ENCODE measurements at regions of chr12 and their contacts with region 1.

Region 1: DNA sequence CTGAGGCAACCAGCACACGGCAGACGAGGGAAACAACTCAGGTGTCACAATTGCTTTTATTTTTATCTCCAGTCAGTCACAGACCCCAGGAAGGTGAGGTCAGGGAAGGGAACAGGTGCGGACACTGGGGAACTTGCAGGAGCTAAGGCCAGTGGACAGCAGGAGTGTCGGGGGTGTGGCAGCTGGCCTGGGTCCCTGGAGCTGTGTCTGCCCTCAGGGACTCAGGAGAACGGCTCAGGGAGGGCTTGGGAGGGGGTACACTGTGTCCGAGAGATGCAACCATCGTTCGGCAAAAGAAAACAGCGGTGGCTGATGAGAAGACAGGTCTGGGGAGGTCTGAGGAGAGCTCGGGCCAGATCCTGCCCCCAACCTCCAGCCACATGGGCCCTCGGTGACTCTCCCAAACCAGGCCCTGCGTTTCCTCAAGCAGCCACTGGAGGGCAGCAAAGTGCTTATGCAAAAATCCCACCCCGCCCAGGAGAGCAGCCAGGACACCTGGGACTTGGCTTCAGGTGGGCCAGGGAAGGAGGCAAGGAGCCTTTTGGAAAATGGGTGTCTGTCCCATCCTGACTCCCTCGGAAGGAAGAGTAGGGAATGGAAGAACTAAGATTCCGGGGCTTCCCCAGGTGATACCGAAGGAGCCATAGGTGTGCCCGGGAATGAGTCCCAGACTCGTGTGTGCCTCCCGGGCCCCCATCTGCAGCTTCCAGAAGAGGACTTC is 24.1 kb upstream of the BCDIN3D start:
- DNase-seq: peak; percentile 93
- CTCF ChIP-seq: peak; percentile 94

Region 2: DNA sequence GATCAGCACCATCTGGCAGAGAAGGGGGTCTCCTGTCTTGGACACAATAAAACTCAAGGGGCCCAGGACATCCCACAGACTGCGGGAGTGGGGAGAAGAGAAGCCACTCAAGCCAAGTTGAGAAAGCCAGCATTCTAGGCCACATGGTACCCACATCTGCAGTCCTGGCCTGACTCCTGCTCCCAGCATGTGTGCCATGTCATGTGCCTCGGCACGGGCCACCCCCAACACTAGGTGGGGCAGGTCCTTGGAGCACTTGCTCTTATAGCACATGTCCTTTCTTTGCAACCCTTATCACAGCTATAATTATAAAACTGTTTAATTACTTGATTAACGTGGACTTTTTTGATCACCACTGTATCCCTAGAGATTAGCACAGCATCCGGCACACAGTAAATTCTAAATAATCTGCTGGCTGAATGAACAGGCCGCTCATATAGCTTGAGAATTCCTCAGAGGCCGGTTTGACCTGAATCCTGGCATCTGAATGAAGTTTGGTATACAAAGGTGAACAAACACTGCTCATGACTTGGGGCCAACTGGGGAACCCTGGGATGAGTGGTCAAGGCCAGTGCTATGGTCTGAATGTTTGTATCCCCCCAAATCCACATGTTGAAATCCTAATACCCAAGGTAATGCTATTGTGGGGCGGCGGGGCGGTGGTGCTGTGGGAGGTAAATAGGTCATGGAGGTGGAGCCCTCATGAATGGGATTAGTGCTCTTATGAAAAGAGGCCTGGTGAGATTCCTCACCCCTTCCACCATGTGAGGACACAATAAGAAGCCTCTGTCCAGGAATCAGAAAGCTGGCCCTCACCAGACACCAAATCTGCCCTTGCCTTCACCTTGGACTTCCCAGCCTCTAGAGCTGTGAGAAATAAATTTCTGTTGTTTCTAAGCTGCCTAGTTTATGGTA is 45.4 kb before region 1 on chr12:
- CTCF ChIA-PET with region 1: interaction called, 11 read pairs
- POLR2A ChIA-PET with region 1: no interaction called
- DNase-seq: no peak
- CTCF ChIP-seq: no peak

Region 3: DNA sequence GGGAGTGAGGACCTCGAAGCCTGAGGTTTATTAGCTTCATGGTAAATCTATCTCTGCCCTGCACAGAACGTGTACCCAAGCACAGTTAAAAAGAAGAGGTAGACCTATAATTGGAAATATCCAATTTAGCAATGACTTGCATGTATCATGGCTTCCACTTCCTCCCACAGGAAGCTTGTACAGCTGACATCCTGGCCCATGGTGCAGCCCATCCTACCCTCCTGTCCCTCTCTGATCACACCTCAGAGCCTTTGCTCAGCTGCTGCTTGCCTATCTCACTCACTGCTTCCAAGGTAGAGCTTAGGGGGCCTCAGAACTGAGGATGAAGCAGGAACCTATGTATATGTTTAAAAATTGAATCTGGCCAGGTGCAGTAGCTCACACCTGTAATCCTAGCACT is 19.9 kb before region 1 on chr12:
- CTCF ChIA-PET with region 1: interaction called, 11 read pairs
- POLR2A ChIA-PET with region 1: no interaction called
- DNase-seq: no peak
- CTCF ChIP-seq: no peak

Region 4: GRCh38 chr12:49885663-49886470 is 18.8 kb after region 1 on chr12:
- CTCF ChIA-PET with region 1: interaction called, 11 read pairs
- POLR2A ChIA-PET with region 1: no interaction called
- DNase-seq: no peak
- CTCF ChIP-seq: no peak

Region 5: DNA sequence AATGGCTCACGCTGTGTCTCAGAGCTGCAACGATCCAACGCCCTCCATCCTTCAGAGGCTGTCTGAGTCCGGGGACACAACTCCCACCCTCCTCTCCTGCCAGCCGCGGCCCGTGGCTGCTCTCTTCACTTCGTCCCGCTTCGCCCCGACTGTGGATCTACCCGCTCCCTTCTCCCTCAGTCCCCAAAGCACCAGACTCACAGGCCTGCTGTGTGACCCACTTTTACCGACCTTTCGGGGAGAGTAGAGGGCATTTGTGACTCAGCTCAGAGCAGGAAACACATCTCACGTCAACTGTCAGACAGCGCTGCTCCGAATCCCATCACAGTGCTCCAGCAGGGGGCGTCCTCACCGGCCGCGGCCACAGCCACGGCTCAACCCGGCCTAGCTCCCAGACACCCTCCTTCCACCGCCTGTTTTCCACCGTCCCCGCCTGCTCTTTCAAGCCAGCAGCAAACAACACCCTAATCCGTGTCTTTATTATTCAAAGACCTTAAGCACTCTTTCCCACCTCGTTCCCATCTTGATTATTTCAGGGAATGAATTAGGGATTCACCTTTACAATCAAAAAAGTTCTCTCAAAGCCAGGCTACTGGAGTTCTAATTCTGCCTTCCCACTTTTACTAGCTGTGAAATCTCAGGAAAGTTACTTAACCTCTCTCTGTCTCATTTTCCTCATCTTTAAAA is 78.5 kb after region 1 on chr12:
- CTCF ChIA-PET with region 1: interaction called, 15 read pairs
- POLR2A ChIA-PET with region 1: no interaction called
- DNase-seq: peak; percentile 92
- CTCF ChIP-seq: peak; percentile 90